Activated CD4-positive, alpha-beta T cell treated with anti-CD3 and anti-CD28 coated beads for 36 hours (primary cell): ENCODE measurements at regions of chr9 and their contacts with region 1.

Region 1: DNA sequence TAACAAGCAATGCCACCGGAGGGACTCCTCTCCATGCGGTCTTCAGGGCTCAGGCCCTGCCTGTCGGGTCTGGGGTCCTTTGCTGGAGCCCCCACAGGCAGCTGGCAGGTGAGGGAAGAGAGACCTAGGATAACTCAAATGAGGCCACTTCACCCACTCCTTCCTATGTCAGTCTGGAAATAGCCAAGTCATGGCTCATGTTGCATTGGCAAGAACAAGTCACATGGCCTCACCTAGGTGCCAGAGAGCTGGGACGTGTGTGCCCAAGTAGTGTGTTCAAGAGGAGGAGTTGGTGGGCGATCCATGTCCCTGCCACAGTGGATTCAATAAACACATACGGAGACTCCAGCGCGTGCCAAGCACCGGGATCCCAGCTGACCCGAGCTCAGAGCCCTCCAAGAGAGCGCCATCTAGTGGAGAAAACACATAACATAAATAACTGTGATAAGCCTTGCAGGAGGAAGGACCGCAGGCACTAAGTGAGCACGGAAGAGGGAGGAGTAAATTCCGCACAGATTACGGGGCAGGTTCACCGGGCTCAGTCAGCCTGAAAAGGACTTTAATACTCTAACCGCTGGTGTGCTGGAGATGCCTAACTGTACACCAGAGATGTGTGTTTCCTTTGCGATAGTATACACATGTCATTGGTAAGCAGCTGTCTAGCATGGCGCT is 580.8 kb downstream of the CCDC171 start:
- DNase-seq: peak; percentile 52
- ATAC-seq: peak; percentile 90
- H3K4me3 Mint-ChIP-seq: no peak overlapping the region
- H3K27ac Mint-ChIP-seq: no peak overlapping the region
- H3K4me1 Mint-ChIP-seq: no peaks in the 10 kb centered on the region
- H3K27me3 Mint-ChIP-seq: peaks cover 2% of the 10 kb centered on the region

Region 2: DNA sequence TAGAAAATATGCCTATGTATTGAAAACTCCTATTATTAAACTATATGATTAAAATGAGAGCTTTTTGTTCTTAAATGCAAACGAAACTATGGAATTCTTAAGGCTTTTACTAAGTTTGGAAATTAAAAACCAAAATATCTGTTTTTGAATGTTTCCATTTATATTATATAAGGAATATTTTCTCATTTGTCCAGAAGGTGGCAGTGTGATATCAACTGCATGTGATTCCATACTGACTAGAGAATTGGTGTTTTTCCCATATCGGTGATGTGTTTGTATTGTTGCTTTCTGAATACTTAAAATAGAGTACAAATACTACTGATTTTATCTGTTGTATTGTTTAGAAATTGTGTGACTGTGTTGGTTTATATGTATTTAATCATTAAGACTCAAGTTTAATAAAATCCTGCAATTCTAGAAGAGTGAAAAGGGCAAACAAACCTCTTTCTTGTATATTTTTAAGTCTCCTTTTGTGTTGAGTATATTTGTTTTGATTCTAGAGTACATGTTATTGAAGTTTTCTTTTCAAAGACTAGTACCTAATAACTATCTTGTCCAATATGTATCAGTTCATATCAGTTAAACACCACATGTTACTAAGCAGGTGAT is 260.0 kb before region 1 on chr9:
- CTCF ChIA-PET with region 1: interaction called, 7 read pairs
- POLR2A ChIA-PET with region 1: no interaction called
- intact Hi-C with region 1: loop called (anchors 1 to 5 kb)
- DNase-seq: no peak
- ATAC-seq: no peak
- H3K4me3 Mint-ChIP-seq: no peak overlapping the region
- H3K27ac Mint-ChIP-seq: no peak overlapping the region
- H3K4me1 Mint-ChIP-seq: no peaks in the 10 kb centered on the region
- H3K27me3 Mint-ChIP-seq: no peaks in the 10 kb centered on the region

Region 3: DNA sequence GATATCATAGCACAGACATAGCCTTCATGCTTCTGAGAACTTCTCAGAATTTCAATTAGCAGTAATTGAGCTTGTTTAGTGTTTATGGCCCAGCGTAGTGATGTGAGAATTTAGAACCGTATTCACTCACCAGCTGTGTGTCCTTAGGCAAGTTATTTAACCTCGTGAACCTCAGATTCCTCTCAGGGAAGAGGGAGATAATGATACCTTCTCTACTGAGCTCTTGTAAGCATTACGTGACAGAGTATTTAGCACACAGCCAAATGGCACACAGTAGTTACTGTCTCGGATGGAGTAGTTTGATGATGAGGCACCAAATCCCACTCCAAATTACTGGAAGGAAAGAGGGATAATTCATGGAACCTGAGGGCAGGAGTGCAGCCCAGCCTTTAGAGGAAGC is 151.5 kb before region 1 on chr9:
- CTCF ChIA-PET with region 1: no interaction called
- POLR2A ChIA-PET with region 1: no interaction called
- intact Hi-C with region 1: no loop called
- DNase-seq: no peak
- ATAC-seq: no peak
- H3K4me3 Mint-ChIP-seq: no peak overlapping the region
- H3K27ac Mint-ChIP-seq: no peak overlapping the region
- H3K4me1 Mint-ChIP-seq: no peaks in the 10 kb centered on the region
- H3K27me3 Mint-ChIP-seq: peaks cover 2% of the 10 kb centered on the region

Region 4: DNA sequence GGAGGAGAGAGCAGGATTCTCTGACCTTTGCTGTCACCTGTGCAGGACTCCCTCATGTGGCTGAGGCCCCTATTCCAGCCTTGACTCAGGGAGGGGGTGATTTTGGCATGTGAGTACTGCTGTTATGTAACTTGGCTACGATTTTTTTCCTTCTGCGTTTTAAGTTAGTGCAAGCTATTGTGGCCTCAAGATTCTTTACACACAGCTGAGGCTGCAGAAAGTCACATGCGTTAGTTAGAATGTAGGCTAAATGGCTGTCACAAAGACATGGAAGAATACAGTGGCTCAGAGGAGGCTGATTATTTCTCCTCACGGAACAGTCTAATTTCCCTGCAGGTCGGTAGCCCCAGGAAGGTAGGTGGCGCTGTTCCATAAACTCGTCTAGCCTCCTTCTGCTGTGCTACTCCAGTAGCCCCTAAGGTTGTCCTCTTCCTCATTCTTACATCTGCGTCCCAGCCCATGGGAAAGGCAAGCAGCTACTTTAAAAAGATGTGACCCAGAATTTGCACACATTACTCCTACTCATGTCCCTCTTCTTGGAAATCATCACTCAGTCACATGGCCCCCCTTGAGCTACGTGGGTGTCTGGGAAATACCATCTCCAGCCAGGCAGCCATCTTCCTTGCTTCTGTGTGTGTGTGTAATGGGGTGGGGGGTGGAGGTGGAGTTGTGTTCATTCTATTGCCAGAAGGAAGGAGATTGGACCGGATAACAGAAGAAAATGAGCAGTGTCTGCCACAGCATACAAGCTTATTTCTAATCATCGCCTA is 94.3 kb before region 1 on chr9:
- CTCF ChIA-PET with region 1: interaction called, 4 read pairs
- POLR2A ChIA-PET with region 1: no interaction called
- intact Hi-C with region 1: loop called in 1 of 2 experiments (anchors 1 kb)
- DNase-seq: peak; percentile 49
- ATAC-seq: peak; percentile 44
- H3K4me3 Mint-ChIP-seq: no peak overlapping the region
- H3K27ac Mint-ChIP-seq: no peak overlapping the region
- H3K4me1 Mint-ChIP-seq: no peaks in the 10 kb centered on the region
- H3K27me3 Mint-ChIP-seq: no peaks in the 10 kb centered on the region

Region 5: GRCh38 chr9:16154521-16155078 is 20.9 kb after region 1 on chr9:
- CTCF ChIA-PET with region 1: no interaction called
- POLR2A ChIA-PET with region 1: no interaction called
- intact Hi-C with region 1: loop called in 1 of 2 experiments (anchors 2 kb)
- DNase-seq: peak; percentile 78
- ATAC-seq: peak; percentile 99
- H3K4me3 Mint-ChIP-seq: peak overlapping the region; percentile 40
- H3K27ac Mint-ChIP-seq: peak overlapping the region; percentile 55
- H3K4me1 Mint-ChIP-seq: peaks cover 10% of the 10 kb centered on the region
- H3K27me3 Mint-ChIP-seq: peaks cover 8% of the 10 kb centered on the region

Region 6: DNA sequence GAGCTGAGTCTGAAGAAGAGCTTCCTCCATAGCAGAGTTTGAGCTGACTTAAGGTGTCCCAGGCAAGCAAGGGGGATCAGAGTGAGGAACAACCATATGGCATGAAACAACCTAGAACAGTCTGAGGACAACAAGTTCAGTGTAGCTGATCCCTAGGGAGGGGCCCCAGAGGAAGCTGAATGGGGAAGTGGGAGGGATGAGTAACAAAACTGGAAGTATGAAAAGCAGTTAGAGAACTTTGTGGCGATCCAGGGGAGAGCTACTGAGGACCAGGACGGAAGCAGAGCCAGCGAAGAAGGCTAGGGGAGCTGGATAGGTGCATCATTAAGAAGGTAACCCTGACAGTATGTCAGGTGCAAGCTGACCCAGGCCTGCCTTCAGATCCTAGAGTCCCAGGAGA is 155.9 kb after region 1 on chr9:
- CTCF ChIA-PET with region 1: no interaction called
- POLR2A ChIA-PET with region 1: no interaction called
- intact Hi-C with region 1: no loop called
- DNase-seq: no peak
- ATAC-seq: no peak
- H3K4me3 Mint-ChIP-seq: no peak overlapping the region
- H3K27ac Mint-ChIP-seq: no peak overlapping the region
- H3K4me1 Mint-ChIP-seq: no peaks in the 10 kb centered on the region
- H3K27me3 Mint-ChIP-seq: no peaks in the 10 kb centered on the region